ENCODE measurements at regions of chr1 and their contacts with region 1.

Region 1: GRCh38 chr1:65691152-65691900 is 101.4 kb upstream of the PDE4B start:
- DNase-seq: no peak
- ATAC-seq: no peak

Region 2: DNA sequence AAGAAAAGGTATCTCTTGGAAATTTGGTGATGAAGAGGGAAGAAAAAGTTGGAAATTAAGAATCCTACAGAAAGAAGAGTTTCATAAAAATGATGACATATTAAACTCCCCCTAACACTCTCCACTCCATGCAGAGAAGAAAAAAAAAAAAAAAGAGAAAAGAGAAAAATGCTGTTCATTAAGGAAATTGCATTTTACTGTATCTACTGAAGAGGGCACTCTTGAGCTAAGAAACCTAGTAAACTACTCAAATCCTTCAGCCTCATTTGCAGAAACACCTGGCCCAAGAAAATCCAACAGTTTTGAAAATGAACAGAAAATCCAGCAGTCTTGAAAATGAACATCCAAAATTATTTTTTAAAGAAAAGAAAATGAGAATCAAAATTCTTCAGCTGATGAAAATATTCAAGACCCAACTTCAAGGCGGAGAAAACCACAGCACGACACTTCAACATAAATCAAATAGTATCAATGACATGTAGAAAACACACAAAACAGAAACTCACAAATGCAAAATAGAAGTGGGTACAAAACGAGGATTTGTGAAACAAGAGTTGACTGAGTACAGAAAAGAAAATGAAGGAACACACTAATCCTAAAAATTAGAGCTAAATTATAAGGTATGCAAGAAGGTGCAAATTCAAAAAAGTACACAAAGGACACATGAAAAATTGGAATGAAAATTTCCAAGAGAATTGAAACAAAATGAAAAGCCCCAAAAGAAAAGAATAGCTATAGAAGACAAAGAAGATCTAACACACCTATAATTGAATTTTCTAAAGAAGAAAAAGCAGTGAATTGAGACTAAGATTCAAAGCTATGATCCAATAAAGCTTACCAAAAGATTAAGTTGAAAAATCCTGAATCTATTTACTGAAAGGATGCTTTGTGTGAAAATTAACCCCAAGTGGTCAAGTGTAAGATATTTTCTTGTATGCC is 455.2 kb before region 1 on chr1:
- intact Hi-C with region 1: loop called in 1 of 2 experiments (anchors 10 kb)
- DNase-seq: no peak
- ATAC-seq: no peak

Region 3: GRCh38 chr1:65640046-65640445 is 51.3 kb before region 1 on chr1:
- intact Hi-C with region 1: no loop called
- DNase-seq: no peak
- ATAC-seq: no peak

Region 4: DNA sequence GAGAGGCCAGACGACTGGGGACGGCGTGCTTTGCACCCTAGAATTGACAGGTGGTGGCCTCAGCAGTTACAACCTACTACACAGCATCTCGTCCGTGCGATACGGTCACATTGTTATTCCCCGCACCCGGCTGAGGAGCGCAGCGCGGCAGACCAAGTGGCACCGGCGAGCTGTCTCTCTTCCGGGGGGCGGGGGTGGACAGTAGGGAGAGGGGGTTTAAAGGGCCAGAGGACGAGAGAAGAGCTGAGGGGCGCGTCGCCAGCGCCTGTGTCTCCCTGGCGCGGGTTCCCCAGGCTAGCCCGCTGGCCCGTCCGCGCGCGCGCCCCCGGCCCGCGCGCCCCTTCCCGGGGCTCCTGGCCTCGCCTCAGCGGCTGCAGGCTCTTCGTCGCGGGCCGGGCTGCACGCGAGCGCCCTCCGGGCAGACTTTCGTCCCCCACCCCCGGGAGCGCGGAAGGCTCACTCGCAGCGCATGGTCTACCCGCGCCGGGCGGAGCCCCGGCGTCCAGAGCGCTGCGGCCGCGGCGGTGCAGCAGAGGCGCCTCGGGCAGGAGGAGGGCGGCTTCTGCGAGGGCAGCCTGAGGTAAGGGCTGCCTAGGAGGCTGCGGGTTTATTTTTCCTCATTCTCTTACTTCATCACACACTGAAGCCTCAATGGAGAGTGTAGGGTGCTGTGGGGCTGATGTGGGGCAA is 101.5 kb after region 1 on chr1 and contains the start of gene PDE4B:
- intact Hi-C with region 1: no loop called
- DNase-seq: peak in 1 of 2 donors; percentile 15
- ATAC-seq: peak; percentile 42
- total RNA-seq, gene PDE4B: 4.2 to 4.4 TPM